CD4-positive, alpha-beta T cell (primary cell): ENCODE measurements at regions of chr14 and their contacts with region 1.

Region 1: GRCh38 chr14:65229751-65230749 is 127.7 kb upstream of the MAX start:
- DNase-seq: peak in 12 of 14 experiments; percentile 18 to 57 (median 34)
- ATAC-seq: peak; percentile 86
- H3K4me3 ChIP-seq: peak overlapping the region; percentile 59
- H3K4me3 Mint-ChIP-seq: peak overlapping the region; percentile 90
- H3K27ac ChIP-seq: peak overlapping the region in 1 of 2 donors; percentile 72
- H3K27ac Mint-ChIP-seq: peak overlapping the region; percentile 86
- H3K4me1 ChIP-seq: peaks cover 27% of the 10 kb centered on the region
- H3K4me1 Mint-ChIP-seq: peaks cover 50% of the 10 kb centered on the region
- H3K27me3 ChIP-seq: no peaks in the 10 kb centered on the region
- H3K27me3 Mint-ChIP-seq: no peaks in the 10 kb centered on the region
- CTCF ChIP-seq: no peak

Region 2: DNA sequence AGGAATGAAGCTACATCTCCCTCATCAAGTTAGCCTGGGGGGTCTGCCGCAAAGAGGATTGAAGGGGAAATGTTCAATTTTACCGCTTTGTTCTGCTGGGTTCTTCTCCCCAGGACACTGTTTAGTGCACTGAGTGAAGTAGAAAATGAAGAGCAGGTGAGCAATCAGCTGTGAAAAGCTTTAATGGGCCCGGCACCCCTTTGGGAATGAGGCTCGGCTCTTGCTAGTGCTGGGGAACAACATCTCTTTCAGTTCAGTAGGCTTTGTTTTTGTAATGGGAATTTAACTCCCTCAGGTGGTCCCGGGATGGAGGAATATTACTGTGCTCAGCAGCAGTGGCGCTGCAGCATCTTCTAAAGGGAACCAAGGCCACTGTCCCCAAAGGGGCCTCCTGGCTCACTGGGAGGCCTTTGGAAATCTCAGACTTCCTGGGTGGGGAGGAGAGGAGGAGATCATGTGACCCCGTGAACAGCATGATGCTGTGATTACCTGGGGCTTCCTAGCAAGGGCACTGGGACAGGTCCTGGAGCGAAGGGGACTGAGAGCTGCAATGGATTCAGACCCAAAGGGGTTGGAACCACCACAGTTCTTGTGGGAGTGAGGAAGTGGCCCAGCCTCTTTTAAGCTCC is 42.5 kb before region 1 on chr14:
- CTCF ChIA-PET with region 1: no interaction called
- POLR2A ChIA-PET with region 1: no interaction called
- intact Hi-C with region 1: no loop called
- DNase-seq: no peak
- ATAC-seq: no peak
- H3K4me3 ChIP-seq: no peak overlapping the region
- H3K4me3 Mint-ChIP-seq: no peak overlapping the region
- H3K27ac ChIP-seq: no peak overlapping the region
- H3K27ac Mint-ChIP-seq: no peak overlapping the region
- H3K4me1 ChIP-seq: no peaks in the 10 kb centered on the region
- H3K4me1 Mint-ChIP-seq: no peaks in the 10 kb centered on the region
- H3K27me3 ChIP-seq: no peaks in the 10 kb centered on the region
- H3K27me3 Mint-ChIP-seq: no peaks in the 10 kb centered on the region
- CTCF ChIP-seq: no peak

Region 3: GRCh38 chr14:65287264-65288131 is 57.4 kb after region 1 on chr14:
- CTCF ChIA-PET with region 1: no interaction called
- POLR2A ChIA-PET with region 1: interaction called, 3 read pairs
- intact Hi-C with region 1: loop called in 1 of 2 experiments (anchors 5 kb)
- DNase-seq: peak; percentile 21 to 83 (median 34)
- ATAC-seq: peak; percentile 86
- H3K4me3 ChIP-seq: peak overlapping the region; percentile 24
- H3K4me3 Mint-ChIP-seq: peak overlapping the region; percentile 85
- H3K27ac ChIP-seq: peak overlapping the region; percentile 72 to 73
- H3K27ac Mint-ChIP-seq: peak overlapping the region; percentile 95
- H3K4me1 ChIP-seq: peaks cover 68% of the 10 kb centered on the region
- H3K4me1 Mint-ChIP-seq: peaks cover 70% of the 10 kb centered on the region
- H3K27me3 ChIP-seq: no peaks in the 10 kb centered on the region
- H3K27me3 Mint-ChIP-seq: no peaks in the 10 kb centered on the region
- CTCF ChIP-seq: no peak

Region 4: DNA sequence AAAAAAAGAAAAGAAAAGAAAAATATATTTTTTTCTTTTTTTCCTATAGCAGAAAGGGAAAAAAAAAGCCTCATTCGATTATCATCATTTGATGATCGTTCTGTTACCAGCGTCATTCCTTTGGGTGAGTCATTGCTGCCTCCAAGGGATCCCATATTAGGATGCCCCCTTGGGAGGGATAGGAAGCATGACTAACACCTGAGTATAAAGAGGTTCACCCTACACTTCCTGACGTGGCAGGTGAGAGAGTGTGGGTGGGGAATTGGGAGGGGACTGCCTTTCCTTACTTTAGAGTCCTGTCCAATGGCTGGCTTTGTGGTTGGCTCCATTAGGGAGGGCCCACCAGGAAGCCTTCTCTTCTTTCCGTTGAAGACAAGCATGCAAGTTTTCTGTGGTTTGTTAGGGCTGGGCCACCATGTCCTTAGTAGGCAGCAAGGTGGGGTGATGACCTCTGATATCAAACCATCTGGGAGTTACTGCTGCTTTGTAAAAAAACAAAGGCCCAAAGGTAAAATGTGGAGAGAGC is 126.3 kb after region 1 on chr14:
- CTCF ChIA-PET with region 1: no interaction called
- POLR2A ChIA-PET with region 1: no interaction called
- intact Hi-C with region 1: loop called in 1 of 2 experiments (anchors 5 kb)
- DNase-seq: peak in 5 of 14 experiments; percentile 5 to 51 (median 17)
- ATAC-seq: peak; percentile 59
- H3K4me3 ChIP-seq: no peak overlapping the region
- H3K4me3 Mint-ChIP-seq: no peak overlapping the region
- H3K27ac ChIP-seq: no peak overlapping the region
- H3K27ac Mint-ChIP-seq: peak overlapping the region; percentile 25
- H3K4me1 ChIP-seq: peaks cover 13% of the 10 kb centered on the region
- H3K4me1 Mint-ChIP-seq: peaks cover 26% of the 10 kb centered on the region
- H3K27me3 ChIP-seq: no peaks in the 10 kb centered on the region
- H3K27me3 Mint-ChIP-seq: no peaks in the 10 kb centered on the region
- CTCF ChIP-seq: no peak